ENCODE measurements at regions of chr3 and their contacts with region 1.

Region 1: GRCh38 chr3:61381745-61382392 is 130.6 kb upstream of the FHIT start:
- DNase-seq: peak; percentile 22
- ATAC-seq: peak; percentile 68
- H3K4me3 Mint-ChIP-seq: no peak overlapping the region
- H3K27ac Mint-ChIP-seq: no peak overlapping the region
- H3K4me1 Mint-ChIP-seq: no peaks in the 10 kb centered on the region
- H3K27me3 Mint-ChIP-seq: peaks cover 8% of the 10 kb centered on the region

Region 2: DNA sequence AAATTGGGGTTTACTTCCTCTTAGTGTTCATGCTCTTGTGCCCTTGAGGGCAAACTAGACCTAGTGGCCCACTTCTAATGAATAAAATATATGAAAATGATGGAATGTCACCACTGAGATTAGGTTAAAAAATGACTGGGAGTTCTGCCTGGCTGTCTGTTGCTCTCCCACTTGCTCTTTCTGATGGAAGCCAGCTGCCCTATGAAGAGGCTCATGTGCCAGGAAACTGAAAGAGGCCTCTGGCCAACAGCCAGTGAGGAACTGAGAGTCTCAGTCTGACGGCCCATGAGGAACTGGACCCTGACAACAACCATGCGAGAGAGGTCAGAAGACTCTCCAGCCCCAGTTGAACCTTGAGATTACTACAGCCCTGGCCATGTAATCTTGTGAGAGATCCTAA is 23.5 kb before region 1 on chr3:
- CTCF ChIA-PET with region 1: no interaction called
- POLR2A ChIA-PET with region 1: no interaction called
- DNase-seq: no peak
- ATAC-seq: no peak
- H3K4me3 Mint-ChIP-seq: no peak overlapping the region
- H3K27ac Mint-ChIP-seq: no peak overlapping the region
- H3K4me1 Mint-ChIP-seq: peaks cover 3% of the 10 kb centered on the region
- H3K27me3 Mint-ChIP-seq: peaks cover 2% of the 10 kb centered on the region

Region 3: DNA sequence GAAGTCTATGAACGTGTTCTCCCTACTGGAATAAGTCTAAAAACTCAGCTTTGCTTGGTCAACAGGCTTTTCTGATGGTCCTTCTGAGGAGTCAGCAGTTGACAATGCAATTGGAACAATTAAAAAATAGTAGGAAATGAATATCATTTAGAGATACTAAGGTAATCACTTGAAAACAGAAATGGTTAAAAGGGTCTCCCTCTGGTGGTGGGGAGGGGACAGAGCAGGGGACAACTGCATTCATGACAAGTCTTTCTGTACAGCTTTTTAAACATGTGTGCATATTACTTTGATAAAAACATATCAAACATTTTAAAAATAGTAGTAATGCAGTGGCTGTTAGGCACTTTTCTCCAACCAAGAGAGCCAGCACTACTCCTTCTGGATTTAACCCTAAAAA is 10.7 kb before region 1 on chr3:
- CTCF ChIA-PET with region 1: interaction called, 13 read pairs
- POLR2A ChIA-PET with region 1: no interaction called
- DNase-seq: peak; percentile 27
- ATAC-seq: no peak
- H3K4me3 Mint-ChIP-seq: no peak overlapping the region
- H3K27ac Mint-ChIP-seq: no peak overlapping the region
- H3K4me1 Mint-ChIP-seq: no peaks in the 10 kb centered on the region
- H3K27me3 Mint-ChIP-seq: no peaks in the 10 kb centered on the region

Measured in activated CD8-positive, alpha-beta T cell treated with anti-CD3 and anti-CD28 coated beads, Interleukin-2, amount 10 ng/mL, durations not matched to agents 7 days and 5 days (primary cell).